Activated CD8-positive, alpha-beta T cell treated with anti-CD3 and anti-CD28 coated beads, Interleukin-2, amount 10 ng/mL, durations not matched to agents 7 days and 5 days (primary cell): ENCODE measurements at regions of chr1 and their contacts with region 1.

Region 1: GRCh38 chr1:171485375-171486047 is at the start of gene PRRC2C:
- DNase-seq: peak; percentile 97
- ATAC-seq: peak; percentile 86
- H3K4me3 Mint-ChIP-seq: peak within 1 kb of the TSS; percentile 90
- H3K27ac Mint-ChIP-seq: peak within 1 kb of the TSS; percentile 93
- H3K4me1 Mint-ChIP-seq: peaks cover 45% of the 10 kb centered on the region
- H3K27me3 Mint-ChIP-seq: no peaks in the 10 kb centered on the region
- total RNA-seq, gene PRRC2C: 222 to 228 TPM

Region 2: GRCh38 chr1:170881268-170882265 is 603.9 kb before region 1 on chr1:
- CTCF ChIA-PET with region 1: no interaction called
- POLR2A ChIA-PET with region 1: no interaction called
- DNase-seq: no peak
- ATAC-seq: no peak
- H3K4me3 Mint-ChIP-seq: no peak overlapping the region
- H3K27ac Mint-ChIP-seq: no peak overlapping the region
- H3K4me1 Mint-ChIP-seq: no peaks in the 10 kb centered on the region
- H3K27me3 Mint-ChIP-seq: no peaks in the 10 kb centered on the region

Region 3: DNA sequence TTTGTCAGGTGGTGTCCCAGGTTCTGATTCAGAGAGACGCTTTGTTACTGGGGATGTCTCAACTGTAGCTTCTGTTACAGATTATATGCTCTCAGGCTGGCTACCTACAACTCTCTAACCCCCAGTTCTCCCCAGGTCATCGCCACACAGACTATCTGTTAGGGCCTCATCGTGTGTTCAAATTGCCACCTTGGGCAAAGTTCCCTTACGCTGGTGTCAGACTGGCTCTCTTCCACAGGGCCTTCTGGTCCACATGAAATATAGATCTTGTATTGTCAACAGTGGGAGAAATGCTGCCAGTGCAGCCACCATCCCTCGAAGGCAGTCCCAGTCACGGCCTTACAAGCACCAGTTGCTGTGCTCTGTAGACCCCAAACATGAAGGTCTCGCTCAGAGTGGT is 156.3 kb before region 1 on chr1:
- CTCF ChIA-PET with region 1: no interaction called
- POLR2A ChIA-PET with region 1: no interaction called
- DNase-seq: no peak
- ATAC-seq: no peak
- H3K4me3 Mint-ChIP-seq: no peak overlapping the region
- H3K27ac Mint-ChIP-seq: no peak overlapping the region
- H3K4me1 Mint-ChIP-seq: no peaks in the 10 kb centered on the region
- H3K27me3 Mint-ChIP-seq: no peaks in the 10 kb centered on the region

Region 4: DNA sequence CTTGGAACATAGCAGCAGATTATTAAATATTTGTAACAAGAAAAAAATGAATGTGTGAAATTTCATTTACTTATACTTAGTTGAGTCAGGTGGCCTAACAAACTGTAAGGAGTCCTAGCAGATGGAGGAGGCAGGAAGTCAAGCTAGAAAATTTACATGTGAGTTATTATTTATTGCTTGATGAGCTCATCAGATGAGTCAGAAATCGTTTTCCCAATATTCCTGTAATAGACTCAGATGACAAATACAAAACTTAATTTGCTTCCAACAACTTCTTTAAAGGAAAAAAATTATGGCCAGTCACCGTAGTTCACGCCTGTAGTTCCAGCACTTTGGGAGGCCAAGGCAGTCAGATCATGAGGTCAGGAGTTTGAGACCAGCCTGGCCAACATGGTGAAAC is 44.2 kb before region 1 on chr1:
- CTCF ChIA-PET with region 1: no interaction called
- POLR2A ChIA-PET with region 1: no interaction called
- DNase-seq: no peak
- ATAC-seq: no peak
- H3K4me3 Mint-ChIP-seq: no peak overlapping the region
- H3K27ac Mint-ChIP-seq: no peak overlapping the region
- H3K4me1 Mint-ChIP-seq: no peaks in the 10 kb centered on the region
- H3K27me3 Mint-ChIP-seq: no peaks in the 10 kb centered on the region

Region 5: DNA sequence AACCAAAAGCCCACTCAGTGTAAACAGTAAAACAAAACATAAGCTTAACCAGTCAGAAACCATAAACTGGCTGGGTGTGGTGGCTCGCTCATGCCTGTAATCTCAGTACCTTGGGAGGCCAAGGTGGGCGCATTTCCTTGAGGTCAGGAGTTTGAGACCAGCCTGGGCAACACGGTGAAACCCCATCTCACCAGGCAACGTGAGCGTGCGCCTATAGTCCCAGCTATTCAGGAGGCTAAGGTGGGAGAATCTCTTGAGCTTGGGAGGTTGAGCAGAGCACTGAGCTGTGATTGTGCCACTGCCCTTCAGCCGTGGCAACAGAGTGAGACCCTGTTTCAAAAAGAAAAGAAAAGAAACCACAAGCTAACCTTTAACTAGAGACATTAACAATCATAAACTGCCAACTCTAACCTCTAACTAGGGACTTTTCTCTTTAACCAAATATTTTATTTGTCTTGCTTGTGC is 13.3 kb before region 1 on chr1:
- CTCF ChIA-PET with region 1: interaction called, 10 read pairs
- POLR2A ChIA-PET with region 1: interaction called, 4 read pairs
- DNase-seq: no peak
- ATAC-seq: no peak
- H3K4me3 Mint-ChIP-seq: no peak overlapping the region
- H3K27ac Mint-ChIP-seq: no peak overlapping the region
- H3K4me1 Mint-ChIP-seq: no peaks in the 10 kb centered on the region
- H3K27me3 Mint-ChIP-seq: peaks cover 6% of the 10 kb centered on the region

Region 6: GRCh38 chr1:171501305-171502024 is 16.0 kb after region 1 on chr1:
- CTCF ChIA-PET with region 1: interaction called, 9 read pairs
- POLR2A ChIA-PET with region 1: interaction called, 10 read pairs
- DNase-seq: no peak
- ATAC-seq: no peak
- H3K4me3 Mint-ChIP-seq: no peak overlapping the region
- H3K27ac Mint-ChIP-seq: no peak overlapping the region
- H3K4me1 Mint-ChIP-seq: peaks cover 68% of the 10 kb centered on the region
- H3K27me3 Mint-ChIP-seq: no peaks in the 10 kb centered on the region

Region 7: GRCh38 chr1:171515299-171515698 is 29.8 kb after region 1 on chr1:
- CTCF ChIA-PET with region 1: interaction called, 31 read pairs
- POLR2A ChIA-PET with region 1: interaction called, 30 read pairs
- DNase-seq: no peak
- ATAC-seq: no peak
- H3K4me3 Mint-ChIP-seq: no peak overlapping the region
- H3K27ac Mint-ChIP-seq: peak overlapping the region; percentile 35
- H3K4me1 Mint-ChIP-seq: peaks cover 48% of the 10 kb centered on the region
- H3K27me3 Mint-ChIP-seq: no peaks in the 10 kb centered on the region

Region 8: GRCh38 chr1:171530676-171531075 is 45.2 kb after region 1 on chr1:
- CTCF ChIA-PET with region 1: interaction called, 22 read pairs
- POLR2A ChIA-PET with region 1: interaction called, 5 read pairs
- DNase-seq: no peak
- ATAC-seq: no peak
- H3K4me3 Mint-ChIP-seq: no peak overlapping the region
- H3K27ac Mint-ChIP-seq: no peak overlapping the region
- H3K4me1 Mint-ChIP-seq: no peaks in the 10 kb centered on the region
- H3K27me3 Mint-ChIP-seq: no peaks in the 10 kb centered on the region

Region 9: GRCh38 chr1:171610385-171610784 is 124.9 kb after region 1 on chr1:
- CTCF ChIA-PET with region 1: no interaction called
- POLR2A ChIA-PET with region 1: no interaction called
- DNase-seq: no peak
- ATAC-seq: no peak
- H3K4me3 Mint-ChIP-seq: no peak overlapping the region
- H3K27ac Mint-ChIP-seq: no peak overlapping the region
- H3K4me1 Mint-ChIP-seq: no peaks in the 10 kb centered on the region
- H3K27me3 Mint-ChIP-seq: no peaks in the 10 kb centered on the region

Region 10: DNA sequence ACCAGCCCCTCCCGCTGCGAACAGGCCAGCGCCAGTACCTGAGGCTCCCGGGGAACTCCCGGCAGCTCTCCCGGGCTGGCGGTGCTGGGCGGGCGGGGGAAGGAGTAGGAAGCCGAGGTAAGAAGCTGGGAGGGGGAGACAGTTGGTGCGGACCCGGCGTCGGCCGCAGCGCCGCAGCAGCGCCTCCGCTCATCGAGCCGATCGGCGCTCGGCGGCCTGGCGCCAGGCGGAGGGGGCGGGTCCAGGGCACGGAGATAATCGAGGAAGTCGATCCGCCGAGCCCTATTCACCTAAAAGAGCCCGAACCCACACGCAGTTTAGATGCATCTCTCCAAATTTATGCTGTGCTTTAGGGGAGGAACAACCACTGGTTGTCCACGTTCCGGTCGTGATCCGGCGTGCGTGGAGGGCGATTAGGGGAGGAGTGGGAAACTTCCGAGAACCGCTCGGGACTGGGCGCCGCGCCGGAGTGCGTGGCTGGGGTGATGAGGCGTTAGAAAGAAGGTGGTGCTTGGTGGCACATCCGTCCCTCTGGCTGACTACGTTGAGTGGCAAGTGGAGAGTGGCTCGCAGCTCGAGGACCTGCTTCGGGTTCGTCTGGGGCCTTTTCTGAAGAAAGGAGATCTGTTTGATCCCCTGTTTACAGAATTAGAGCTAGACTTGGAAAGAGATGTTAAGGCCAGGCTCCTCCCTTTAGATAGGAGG is 256.5 kb after region 1 on chr1 and contains the start of gene VAMP4:
- CTCF ChIA-PET with region 1: interaction called, 12 read pairs
- POLR2A ChIA-PET with region 1: interaction called, 18 read pairs
- DNase-seq: peak; percentile 90
- ATAC-seq: peak; percentile 97
- H3K4me3 Mint-ChIP-seq: peak within 1 kb of the TSS; percentile 98
- H3K27ac Mint-ChIP-seq: peak within 1 kb of the TSS; percentile 99
- H3K4me1 Mint-ChIP-seq: peaks cover 49% of the 10 kb centered on the region
- H3K27me3 Mint-ChIP-seq: no peaks in the 10 kb centered on the region
- total RNA-seq, gene VAMP4: 12.2 to 13.0 TPM